MCF 10A (cell line): ENCODE measurements at regions of chr12 and their contacts with region 1.

Region 1: GRCh38 chr12:88580051-88580871 is at the start of gene KITLG:
- DNase-seq: peak; percentile 78
- H3K4me3 Mint-ChIP-seq: peak within 1 kb of the TSS; percentile 90
- H3K27ac Mint-ChIP-seq: peak within 1 kb of the TSS; percentile 76
- H3K4me1 Mint-ChIP-seq: peaks cover 12% of the 10 kb centered on the region
- H3K27me3 Mint-ChIP-seq: no peaks in the 10 kb centered on the region
- CTCF ChIP-seq: no peak
- total RNA-seq, gene KITLG: 3.9 and 4.8 TPM in 2 replicates

Region 2: GRCh38 chr12:88141770-88142609 is 438.3 kb before region 1 on chr12 and contains the starts of genes CEP290 and TMTC3:
- CTCF ChIA-PET with region 1: interaction called, 5 read pairs
- POLR2A ChIA-PET with region 1: interaction called, 16 read pairs
- intact Hi-C with region 1: no loop called
- DNase-seq: peak; percentile 100
- H3K4me3 Mint-ChIP-seq: peak within 1 kb of the TSS; percentile 96
- H3K27ac Mint-ChIP-seq: peak within 1 kb of the TSS; percentile 81
- H3K4me1 Mint-ChIP-seq: peaks cover 38% of the 10 kb centered on the region
- H3K27me3 Mint-ChIP-seq: no peaks in the 10 kb centered on the region
- CTCF ChIP-seq: no peak
- total RNA-seq, gene CEP290: 18.7 and 22.3 TPM in 2 replicates
- total RNA-seq, gene TMTC3: 19.0 and 22.2 TPM in 2 replicates

Region 3: DNA sequence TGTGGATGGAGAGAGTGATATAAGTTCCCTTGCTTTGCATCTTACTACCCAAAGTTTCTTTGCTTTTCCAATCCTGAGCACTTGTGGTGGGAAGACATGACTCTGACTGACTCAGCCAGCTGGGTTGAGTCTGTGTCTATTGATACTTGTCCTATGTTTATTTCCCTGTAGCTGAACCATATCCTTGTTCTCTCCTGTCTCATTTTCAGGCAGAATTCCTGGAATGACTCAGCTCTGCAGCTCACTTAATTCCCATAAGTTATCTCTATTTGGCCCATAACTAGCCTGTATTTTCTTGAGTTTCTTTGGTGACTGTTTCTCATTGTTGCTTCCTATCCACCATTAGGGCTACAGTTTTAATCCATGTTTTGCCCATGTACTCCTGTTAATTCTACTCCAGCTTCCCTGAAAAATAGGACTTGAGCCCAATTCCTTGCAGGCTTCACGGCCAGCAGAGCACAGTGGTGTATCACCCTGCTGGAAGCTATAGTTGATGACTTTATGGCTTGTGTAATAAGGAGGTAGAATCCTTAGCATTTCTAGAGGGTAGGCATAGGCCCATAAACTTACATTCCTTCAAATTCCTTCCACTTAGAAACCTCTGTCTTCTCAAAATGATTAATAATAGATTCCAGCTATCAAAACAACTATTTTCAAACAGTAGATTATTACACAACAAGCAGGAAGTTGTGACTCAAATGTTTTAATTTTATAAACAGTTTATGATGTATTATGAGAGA is 255.0 kb before region 1 on chr12:
- CTCF ChIA-PET with region 1: interaction called, 4 read pairs
- POLR2A ChIA-PET with region 1: interaction called, 4 read pairs
- intact Hi-C with region 1: loop called (anchors 5 kb)
- DNase-seq: peak; percentile 77
- H3K4me3 Mint-ChIP-seq: peak overlapping the region; percentile 22
- H3K27ac Mint-ChIP-seq: peak overlapping the region; percentile 93
- H3K4me1 Mint-ChIP-seq: peaks cover 11% of the 10 kb centered on the region
- H3K27me3 Mint-ChIP-seq: no peaks in the 10 kb centered on the region
- CTCF ChIP-seq: no peak

Region 4: GRCh38 chr12:88559772-88560171 is 20.5 kb before region 1 on chr12:
- CTCF ChIA-PET with region 1: interaction called, 7 read pairs
- POLR2A ChIA-PET with region 1: interaction called, 10 read pairs
- intact Hi-C with region 1: no loop called
- DNase-seq: no peak
- H3K4me3 Mint-ChIP-seq: no peak overlapping the region
- H3K27ac Mint-ChIP-seq: peak overlapping the region; percentile 29
- H3K4me1 Mint-ChIP-seq: peaks cover 26% of the 10 kb centered on the region
- H3K27me3 Mint-ChIP-seq: no peaks in the 10 kb centered on the region
- CTCF ChIP-seq: no peak

Region 5: DNA sequence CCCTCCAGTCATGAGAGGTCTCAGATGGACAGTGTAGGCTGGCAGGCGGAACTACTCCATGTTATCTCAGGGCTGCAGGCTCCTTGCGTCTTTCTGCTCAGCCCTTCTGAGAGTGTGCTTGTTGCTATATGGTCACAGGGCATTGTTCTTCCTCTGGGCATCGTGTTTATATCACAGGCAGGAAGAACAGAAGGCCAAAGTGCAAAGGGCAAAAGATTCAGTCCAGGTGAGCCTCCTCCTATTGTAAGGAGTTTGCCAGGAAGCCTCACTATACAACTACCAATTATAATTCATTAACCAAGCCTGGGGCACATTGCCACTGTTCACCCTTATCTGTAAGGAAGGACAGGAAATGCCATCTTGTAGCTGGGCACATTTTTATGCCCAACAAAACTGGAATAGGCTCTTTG is 195.5 kb after region 1 on chr12:
- CTCF ChIA-PET with region 1: no interaction called
- POLR2A ChIA-PET with region 1: no interaction called
- intact Hi-C with region 1: no loop called
- DNase-seq: no peak
- H3K4me3 Mint-ChIP-seq: no peak overlapping the region
- H3K27ac Mint-ChIP-seq: no peak overlapping the region
- H3K4me1 Mint-ChIP-seq: no peaks in the 10 kb centered on the region
- H3K27me3 Mint-ChIP-seq: no peaks in the 10 kb centered on the region
- CTCF ChIP-seq: no peak

Region 6: DNA sequence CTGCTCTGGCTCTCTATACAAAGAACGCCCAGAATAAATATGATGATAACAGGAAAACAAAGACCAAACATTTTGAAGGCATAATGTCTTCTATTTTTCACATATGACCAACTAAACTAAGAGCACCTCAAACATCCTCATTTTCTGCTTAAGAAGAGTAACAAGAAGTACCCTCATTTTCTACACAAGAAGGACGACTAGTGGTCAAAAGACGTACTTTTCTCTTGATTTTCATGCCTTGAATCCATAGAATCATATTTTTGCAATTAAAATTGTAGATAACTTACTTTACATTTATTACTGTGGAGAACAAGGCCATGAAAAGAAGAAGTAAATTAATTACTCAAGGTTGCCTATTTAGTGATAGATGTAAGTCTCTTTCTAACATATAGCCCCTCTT is 413.4 kb after region 1 on chr12:
- CTCF ChIA-PET with region 1: interaction called, 56 read pairs
- POLR2A ChIA-PET with region 1: interaction called, 10 read pairs
- intact Hi-C with region 1: loop called (anchors 1 kb)
- DNase-seq: peak; percentile 62
- H3K4me3 Mint-ChIP-seq: no peak overlapping the region
- H3K27ac Mint-ChIP-seq: no peak overlapping the region
- H3K4me1 Mint-ChIP-seq: no peaks in the 10 kb centered on the region
- H3K27me3 Mint-ChIP-seq: no peaks in the 10 kb centered on the region
- CTCF ChIP-seq: peak; percentile 55